ENCODE measurements at regions of chr6 and their contacts with region 1.

Region 1: DNA sequence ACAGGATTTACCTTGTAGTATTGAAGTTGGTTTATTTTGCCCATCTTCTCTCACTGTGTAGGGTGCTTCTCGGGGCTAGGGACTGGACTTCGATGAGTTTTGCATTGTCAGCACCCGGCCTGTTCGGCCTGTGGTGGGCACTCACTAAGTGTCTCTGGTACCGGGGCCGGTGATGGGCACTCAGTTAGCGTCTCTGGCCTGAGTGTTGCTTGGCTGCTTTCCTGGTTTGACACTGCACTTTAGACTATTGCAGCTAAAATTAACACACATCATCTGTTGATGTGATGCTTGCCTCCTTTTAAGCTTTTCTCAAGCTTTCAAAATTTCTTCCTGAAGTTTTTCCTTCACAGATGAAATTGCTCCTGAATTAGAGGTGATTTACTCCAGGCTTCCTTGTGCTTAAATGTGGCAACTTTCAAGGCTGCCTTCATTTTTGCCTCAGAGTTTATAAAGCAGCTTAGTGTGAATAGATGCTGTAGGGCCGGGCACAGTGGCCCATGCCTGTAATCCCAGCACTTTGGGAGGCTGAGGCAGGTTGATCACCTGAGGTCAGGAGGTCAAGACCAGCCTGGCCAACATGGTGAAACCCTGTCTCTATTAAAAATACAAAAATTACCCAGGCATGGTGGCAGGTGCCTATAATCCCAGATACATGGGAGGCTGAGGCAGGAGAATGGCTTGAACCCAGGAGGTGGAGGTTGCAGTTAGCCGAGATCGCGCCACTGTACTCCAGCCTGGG is 41.7 kb upstream of the TULP4 start:
- DNase-seq: no peak
- ATAC-seq: no peak
- H3K4me3 ChIP-seq: no peak overlapping the region
- H3K27ac ChIP-seq: no peak overlapping the region
- H3K4me1 ChIP-seq: peaks cover 5% of the 10 kb centered on the region; the same call in 1 of the 2 replicates
- H3K27me3 ChIP-seq: no peaks in the 10 kb centered on the region
- CTCF ChIP-seq: no peak

Region 2: GRCh38 chr6:157123234-157123633 is 1147.3 kb before region 1 on chr6:
- CTCF ChIA-PET with region 1: no interaction called
- POLR2A ChIA-PET with region 1: no interaction called
- intact Hi-C with region 1: no loop called
- DNase-seq: no peak
- ATAC-seq: no peak
- H3K4me3 ChIP-seq: no peak overlapping the region
- H3K27ac ChIP-seq: no peak overlapping the region
- H3K4me1 ChIP-seq: no peaks in the 10 kb centered on the region
- H3K27me3 ChIP-seq: no peaks in the 10 kb centered on the region
- CTCF ChIP-seq: no peak

Region 3: DNA sequence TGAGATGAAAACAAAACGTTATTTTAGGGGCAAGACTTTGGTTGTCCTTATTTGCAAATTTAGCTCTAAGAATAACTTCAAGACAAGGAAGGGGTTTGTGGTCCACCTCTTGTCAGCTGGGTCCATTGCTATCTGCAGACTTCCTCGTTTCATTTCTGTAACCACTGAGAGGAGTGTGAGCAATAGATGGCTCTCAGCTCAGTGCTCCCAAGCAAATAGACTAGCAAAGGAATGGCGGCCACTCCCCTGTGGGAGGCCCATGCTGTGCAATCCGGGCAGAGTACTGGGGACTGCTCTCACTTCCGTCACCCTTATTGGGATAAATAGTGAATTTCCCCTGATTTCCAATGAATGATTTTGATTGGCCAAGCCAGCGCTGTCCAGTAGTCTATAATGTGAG is 713.0 kb before region 1 on chr6:
- CTCF ChIA-PET with region 1: no interaction called
- POLR2A ChIA-PET with region 1: no interaction called
- intact Hi-C with region 1: no loop called
- DNase-seq: no peak
- ATAC-seq: no peak
- H3K4me3 ChIP-seq: no peak overlapping the region
- H3K27ac ChIP-seq: no peak overlapping the region
- H3K4me1 ChIP-seq: peaks cover 2% of the 10 kb centered on the region; the same call in 1 of the 2 replicates
- H3K27me3 ChIP-seq: no peaks in the 10 kb centered on the region
- CTCF ChIP-seq: no peak

Region 4: DNA sequence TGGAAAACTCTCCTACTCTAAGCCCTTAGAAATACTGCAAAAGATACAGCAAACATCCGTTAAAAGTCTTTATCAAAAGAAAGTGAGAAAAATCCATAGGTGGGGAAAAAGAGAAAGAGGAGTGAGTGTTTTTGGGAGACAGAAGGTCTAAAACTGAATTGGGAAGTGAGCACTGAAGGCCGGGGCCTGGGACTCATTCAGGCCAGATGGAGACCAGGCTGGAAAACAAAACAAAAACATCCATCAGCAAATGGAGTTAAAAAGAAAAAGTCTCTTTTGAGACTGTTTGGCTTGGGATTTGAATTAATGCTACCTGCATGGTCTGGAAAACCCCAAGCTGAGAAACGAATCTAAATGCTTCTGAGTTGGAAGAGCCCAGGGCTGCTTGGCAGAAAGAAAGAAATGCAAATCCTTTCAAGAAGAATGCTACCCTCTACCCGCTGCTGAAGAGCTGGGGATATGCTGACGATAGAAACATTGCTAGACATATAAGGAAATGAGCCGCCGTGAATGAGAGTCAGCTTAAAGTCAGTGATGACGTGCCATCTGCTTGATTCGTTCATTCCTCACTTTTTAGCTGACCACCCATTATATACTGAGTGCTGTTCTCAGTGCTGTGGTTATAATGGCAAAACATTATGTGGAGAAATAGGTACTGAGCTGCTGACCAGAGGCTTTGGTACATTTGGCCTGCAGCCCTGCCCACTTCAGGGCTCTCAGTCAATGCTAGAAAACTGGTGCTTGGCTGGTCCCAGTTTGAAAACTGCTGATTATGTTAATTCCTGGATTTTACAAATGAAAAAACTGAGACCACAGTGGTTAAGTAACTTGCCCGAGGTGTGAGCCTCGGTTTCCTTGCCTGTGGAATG is 13.7 kb after region 1 on chr6:
- CTCF ChIA-PET with region 1: no interaction called
- POLR2A ChIA-PET with region 1: no interaction called
- intact Hi-C with region 1: loop called (anchors 1 kb)
- DNase-seq: no peak
- ATAC-seq: no peak
- H3K4me3 ChIP-seq: no peak overlapping the region
- H3K27ac ChIP-seq: no peak overlapping the region
- H3K4me1 ChIP-seq: peaks cover 5% of the 10 kb centered on the region
- H3K27me3 ChIP-seq: no peaks in the 10 kb centered on the region
- CTCF ChIP-seq: no peak

Measured in PC-3 (cell line).